Pancreas (tissue), 10 donors: ENCODE measurements at regions of chr1 and their contacts with region 1.

Region 1: GRCh38 chr1:61049850-61050540 is 32.4 kb upstream of the NFIA start:
- DNase-seq: peak; percentile 89 to 100 (median 96)
- ATAC-seq: peak; percentile 83 to 94 (median 90)
- H3K4me3 ChIP-seq: peak overlapping the region; percentile 59 to 91 (median 84)
- H3K27ac ChIP-seq: peak overlapping the region; percentile 94 to 99 (median 96)
- H3K4me1 ChIP-seq: peaks cover 0 to 12% (median 3%) of the 10 kb centered on the region in 3 donors
- H3K27me3 ChIP-seq: no peaks in the 10 kb centered on the region
- CTCF ChIP-seq: peak; percentile 94 to 99 (median 96)

Region 2: DNA sequence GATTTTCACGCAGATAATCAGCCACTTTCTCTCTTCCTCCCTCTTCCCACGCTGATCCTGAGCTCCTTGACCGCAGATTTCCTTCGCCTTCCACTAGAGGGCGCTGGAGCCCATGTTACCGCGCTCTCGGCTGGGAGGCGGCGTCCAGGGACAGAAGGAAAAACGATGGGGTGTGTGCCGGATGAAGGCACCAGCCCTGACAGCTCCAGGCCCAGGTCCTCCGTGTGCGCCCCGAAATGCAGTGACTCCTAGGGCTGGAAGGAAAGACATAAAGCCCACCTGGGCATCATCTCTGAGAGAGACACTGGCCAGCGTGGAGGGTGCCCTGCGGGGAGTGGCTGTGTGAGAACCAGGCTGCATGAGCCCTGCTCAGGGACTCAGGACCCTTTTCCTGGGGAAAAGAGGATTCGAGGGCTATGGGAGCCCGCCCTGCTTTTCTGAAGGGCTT is 1078.5 kb before region 1 on chr1:
- intact Hi-C with region 1: loop called in 1 of 3 experiments (anchors 10 kb)
- DNase-seq: peak; percentile 39 to 89 (median 74)
- ATAC-seq: peak; percentile 81 to 87 (median 85)
- H3K4me3 ChIP-seq: no peak overlapping the region
- H3K27ac ChIP-seq: no peak overlapping the region
- H3K4me1 ChIP-seq: peaks cover 0 to 15% (median 8%) of the 10 kb centered on the region in 3 donors
- H3K27me3 ChIP-seq: no peaks in the 10 kb centered on the region
- CTCF ChIP-seq: peak; percentile 77 to 86 (median 82)

Region 3: DNA sequence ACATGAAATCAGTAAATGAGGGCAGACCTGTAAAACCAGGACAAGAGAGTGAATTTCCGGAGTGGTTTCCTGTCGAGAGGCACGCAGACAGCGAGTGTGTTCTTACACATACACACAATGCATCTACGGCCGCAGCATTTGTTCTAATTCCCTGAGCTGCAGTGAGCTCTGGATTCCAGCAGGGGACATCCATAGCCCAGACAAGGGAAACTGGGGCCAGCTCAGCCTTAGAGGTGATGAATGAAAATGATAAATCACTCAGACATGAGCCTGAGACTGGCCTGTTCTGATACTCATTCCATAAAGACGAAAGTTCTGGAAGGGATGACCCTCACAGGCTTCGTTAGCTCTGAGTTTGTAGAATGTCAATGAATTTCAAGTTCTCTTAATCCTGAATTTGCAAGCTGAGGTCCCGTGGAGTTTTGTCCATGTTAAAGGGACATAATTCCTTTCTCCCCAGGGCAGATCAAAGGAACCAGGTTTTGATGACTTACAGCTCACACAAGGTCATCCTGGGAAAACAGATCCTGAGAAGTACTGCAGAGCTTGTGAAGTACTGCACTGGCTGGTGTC is 768.5 kb before region 1 on chr1:
- intact Hi-C with region 1: loop called in 1 of 3 experiments (anchors 10 kb)
- DNase-seq: peak; percentile 50 to 75 (median 59)
- ATAC-seq: peak; percentile 89 to 97 (median 97)
- H3K4me3 ChIP-seq: no peak overlapping the region
- H3K27ac ChIP-seq: no peak overlapping the region
- H3K4me1 ChIP-seq: peaks cover 0 to 14% (median 12%) of the 10 kb centered on the region in 3 donors
- H3K27me3 ChIP-seq: no peaks in the 10 kb centered on the region
- CTCF ChIP-seq: peak; percentile 43 to 92 (median 78)

Region 4: DNA sequence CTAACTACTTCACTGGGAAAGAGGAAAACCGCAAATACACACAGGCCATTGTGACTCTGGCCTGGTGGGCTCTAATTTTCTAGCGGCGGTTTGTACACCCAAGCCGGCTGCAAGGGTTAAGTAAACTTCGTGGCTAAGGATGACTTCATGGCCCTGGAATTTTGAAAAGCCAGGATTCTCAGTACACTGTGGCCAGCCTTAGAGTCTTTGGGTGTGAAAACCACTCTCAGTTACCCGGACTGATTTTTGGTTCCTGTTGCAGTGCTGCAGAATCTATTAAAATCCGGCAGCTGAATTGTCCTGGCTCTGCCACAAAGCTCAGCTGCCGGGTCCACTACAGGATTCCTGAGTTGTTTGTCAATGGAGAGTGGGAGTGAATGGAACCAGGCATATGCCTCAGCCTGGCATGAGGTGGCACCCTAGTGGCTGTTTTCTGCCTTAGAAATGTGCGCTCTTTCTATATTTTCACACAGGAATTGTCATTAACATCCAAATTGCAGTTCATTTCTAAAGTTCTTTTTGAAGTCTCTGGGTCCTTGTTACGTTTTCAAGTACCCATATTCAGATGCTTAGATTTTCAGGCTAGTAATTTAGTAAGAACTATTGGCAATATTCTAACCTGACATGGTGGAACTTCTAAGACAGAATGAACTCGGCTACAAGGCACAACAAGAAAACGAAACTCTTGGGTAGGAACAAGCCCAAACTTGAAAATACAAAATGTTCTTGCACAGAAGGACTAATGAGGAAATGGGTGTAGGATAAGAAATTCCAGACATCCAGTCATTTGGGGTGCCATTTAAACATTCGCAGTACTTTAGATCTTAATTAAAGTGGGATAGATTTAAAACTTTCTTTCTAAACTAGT is 288.2 kb after region 1 on chr1:
- intact Hi-C with region 1: loop called in 1 of 3 experiments (anchors 10 kb)
- DNase-seq: peak in 5 of 6 donors; percentile 56 to 81 (median 73)
- ATAC-seq: peak; percentile 93 to 97 (median 95)
- H3K4me3 ChIP-seq: peak overlapping the region in 2 of 4 donors; percentile 13 to 26
- H3K27ac ChIP-seq: peak overlapping the region; percentile 61 to 88 (median 68)
- H3K4me1 ChIP-seq: peaks cover 16 to 29% (median 24%) of the 10 kb centered on the region in 3 donors
- H3K27me3 ChIP-seq: no peaks in the 10 kb centered on the region
- CTCF ChIP-seq: peak; percentile 38 to 70 (median 58)

Region 5: DNA sequence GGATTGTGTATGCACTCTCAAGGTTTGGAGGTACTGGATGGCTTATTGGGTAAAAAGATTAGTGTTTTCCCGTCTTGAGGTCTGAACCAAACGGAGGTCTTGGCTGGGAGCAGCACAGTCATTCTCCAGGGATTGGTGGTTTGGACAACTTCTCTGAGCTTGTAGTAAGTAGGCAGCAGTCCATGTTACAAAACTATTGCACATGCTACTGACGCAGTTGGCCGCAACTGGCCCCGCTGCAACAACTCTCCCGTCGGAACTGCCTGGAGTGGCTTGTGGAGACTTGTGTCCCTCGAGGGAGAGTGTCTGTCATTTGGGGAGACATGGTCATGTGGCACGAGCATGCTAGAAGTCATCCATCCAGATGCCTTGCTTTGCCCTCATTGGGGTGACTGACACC is 398.9 kb after region 1 on chr1:
- intact Hi-C with region 1: loop called in 1 of 3 experiments (anchors 10 kb)
- DNase-seq: peak in 2 of 6 donors; percentile 21 to 27
- ATAC-seq: peak in 2 of 4 donors; percentile 15 to 33
- H3K4me3 ChIP-seq: no peak overlapping the region
- H3K27ac ChIP-seq: no peak overlapping the region
- H3K4me1 ChIP-seq: peaks cover 5 to 22% (median 19%) of the 10 kb centered on the region in 3 donors
- H3K27me3 ChIP-seq: no peaks in the 10 kb centered on the region
- CTCF ChIP-seq: no peak